Endothelial cell of umbilical vein (primary cell): ENCODE measurements at regions of chr11 and their contacts with region 1.

Region 1: DNA sequence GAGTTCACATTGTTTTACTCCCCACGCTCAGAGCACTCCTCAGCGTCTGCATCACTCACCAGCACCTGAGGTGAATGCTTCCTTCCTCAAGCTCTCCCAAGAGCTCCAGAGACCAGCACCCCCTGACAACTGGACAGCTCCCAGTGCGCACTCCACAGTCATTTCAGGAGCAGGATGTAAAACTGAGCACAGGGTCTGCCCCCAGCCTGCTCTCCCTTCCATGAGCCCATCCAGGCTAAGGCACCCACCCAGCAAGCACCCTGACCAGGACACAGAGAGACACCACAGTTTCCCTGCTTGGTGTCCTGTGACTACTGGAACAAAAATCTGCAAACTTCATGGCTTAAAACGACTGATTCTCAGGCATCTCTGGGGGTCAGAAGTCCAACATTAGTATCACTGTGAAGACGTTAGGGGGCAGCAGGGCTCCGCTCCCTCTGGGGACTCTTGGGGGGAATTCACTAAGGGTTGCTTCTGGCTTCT is 3.3 kb downstream of the SCGB1D2 start:
- DNase-seq: peak; percentile 51
- H3K4me3 ChIP-seq: no peak overlapping the region
- H3K27ac ChIP-seq: no peak overlapping the region
- H3K4me1 ChIP-seq: no peaks in the 10 kb centered on the region
- H3K27me3 ChIP-seq: peaks cover 0 to 5% of the 10 kb centered on the region in 2 experiments
- CTCF ChIP-seq: peak; percentile 18 to 23
- POLR2A ChIP-seq: no peak

Region 2: DNA sequence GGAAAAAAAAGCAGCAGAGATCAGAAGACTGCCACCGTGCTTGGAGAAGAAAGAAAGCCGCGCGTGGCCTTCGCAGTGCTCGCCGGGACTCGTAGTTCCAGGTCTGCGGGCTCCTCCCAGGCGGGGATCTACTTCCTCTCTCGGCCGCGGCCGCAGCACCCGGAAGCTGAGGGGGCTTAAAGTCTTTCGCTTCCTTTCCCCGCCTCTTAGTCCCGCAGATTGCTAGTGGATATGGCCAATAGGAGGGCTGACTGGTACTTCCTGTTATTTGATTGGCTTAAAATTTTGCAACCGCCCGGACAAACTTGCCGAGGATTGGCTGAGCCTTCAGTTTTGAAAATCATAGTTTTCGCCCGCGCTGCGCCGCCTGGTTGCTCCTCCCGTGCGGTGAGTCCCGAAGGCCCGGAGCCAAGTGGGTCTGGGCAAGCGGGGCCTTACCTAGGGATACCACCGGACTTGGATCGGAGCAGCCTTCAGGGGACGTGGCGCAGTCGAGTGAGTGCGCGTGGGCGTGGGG is 121.6 kb before region 1 on chr11 and contains the start of gene INCENP:
- CTCF ChIA-PET with region 1: no interaction called
- POLR2A ChIA-PET with region 1: no interaction called
- dilution Hi-C with region 1: no loop called
- intact Hi-C with region 1: no loop called
- DNase-seq: peak; percentile 100
- H3K4me3 ChIP-seq: peak within 1 kb of the TSS; percentile 53 to 84 (median 69)
- H3K27ac ChIP-seq: peak within 1 kb of the TSS; percentile 19
- H3K4me1 ChIP-seq: peaks cover 19% of the 10 kb centered on the region
- H3K27me3 ChIP-seq: peaks cover 0 to 2% of the 10 kb centered on the region in 2 experiments
- CTCF ChIP-seq: no peak
- POLR2A ChIP-seq: peak; percentile 67
- total RNA-seq, gene INCENP: 73.6 and 86.8 TPM in 2 replicates

Region 3: GRCh38 chr11:62315431-62315830 is 70.1 kb after region 1 on chr11:
- CTCF ChIA-PET with region 1: interaction called, 31 read pairs
- POLR2A ChIA-PET with region 1: no interaction called
- dilution Hi-C with region 1: no loop called
- intact Hi-C with region 1: loop called (anchors 1 kb)
- DNase-seq: no peak
- H3K4me3 ChIP-seq: no peak overlapping the region
- H3K27ac ChIP-seq: no peak overlapping the region
- H3K4me1 ChIP-seq: no peaks in the 10 kb centered on the region
- H3K27me3 ChIP-seq: peaks cover 8 to 12% of the 10 kb centered on the region in 2 experiments
- CTCF ChIP-seq: no peak
- POLR2A ChIP-seq: no peak

Region 4: DNA sequence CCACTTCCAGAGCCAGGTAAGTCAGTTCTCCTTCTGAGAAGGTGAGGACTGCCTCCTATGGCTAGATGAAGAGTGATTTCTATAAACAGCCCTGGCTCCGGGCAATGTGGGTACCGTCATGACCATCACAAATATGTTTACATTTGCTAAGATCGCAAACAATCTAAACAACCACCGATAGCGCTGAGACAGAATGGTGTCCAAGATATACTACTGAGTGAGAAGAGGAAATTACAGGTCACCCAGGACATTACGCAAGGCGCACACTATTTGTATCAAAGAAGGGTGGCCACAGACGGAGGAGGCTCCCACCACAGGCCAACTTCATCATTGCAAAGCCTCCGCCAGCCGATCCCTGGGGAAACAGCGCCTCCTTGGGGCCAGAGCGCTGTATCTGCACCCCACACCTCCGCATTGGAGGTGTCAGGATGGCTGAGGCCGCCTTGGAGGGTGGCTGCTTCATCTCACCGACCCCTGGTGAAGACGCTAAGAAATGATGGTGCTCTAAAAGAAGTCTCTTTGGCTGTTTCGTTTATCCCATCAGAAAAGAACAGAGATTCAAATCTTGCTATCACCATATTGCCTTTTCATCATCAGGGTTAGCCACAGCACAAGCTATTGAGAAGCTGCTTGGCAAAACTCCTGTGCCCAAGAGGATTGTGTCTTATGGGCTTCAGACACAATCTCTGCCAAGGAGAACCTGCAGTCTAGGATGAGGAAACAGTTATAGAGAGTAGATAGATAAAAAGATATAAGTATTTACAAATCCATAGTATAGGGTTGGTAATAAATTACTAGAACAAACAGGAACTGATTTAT is 79.6 kb after region 1 on chr11:
- CTCF ChIA-PET with region 1: no interaction called
- POLR2A ChIA-PET with region 1: no interaction called
- dilution Hi-C with region 1: no loop called
- intact Hi-C with region 1: loop called (anchors 1 kb)
- DNase-seq: peak; percentile 45
- H3K4me3 ChIP-seq: no peak overlapping the region
- H3K27ac ChIP-seq: no peak overlapping the region
- H3K4me1 ChIP-seq: no peaks in the 10 kb centered on the region
- H3K27me3 ChIP-seq: peaks cover 0 to 5% of the 10 kb centered on the region in 2 experiments
- CTCF ChIP-seq: peak; percentile 79 to 82
- POLR2A ChIP-seq: no peak